ENCODE measurements at regions of chr16 and their contacts with region 1.

Region 1: DNA sequence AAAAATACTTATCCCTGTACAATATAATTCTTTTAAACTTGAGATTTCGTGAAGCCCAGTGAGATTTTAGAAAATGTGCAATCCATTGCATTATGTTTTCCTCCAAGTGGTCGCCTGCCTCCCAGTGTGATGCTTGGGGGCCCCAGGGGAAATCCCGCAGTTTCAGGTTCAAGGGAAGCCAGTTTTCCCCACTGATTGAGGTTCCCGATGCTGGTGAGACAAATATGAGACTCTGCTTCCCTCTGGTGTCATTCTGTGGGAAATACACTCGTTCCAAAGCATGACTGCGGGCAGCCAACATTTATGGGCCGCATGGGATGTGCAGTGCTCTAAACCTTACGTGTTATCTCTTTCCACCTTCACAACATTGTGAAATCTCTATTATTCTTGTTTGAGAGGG is 200.8 kb downstream of the PRKCB start:
- DNase-seq: no peak
- ATAC-seq: peak; percentile 47 to 68

Region 2: DNA sequence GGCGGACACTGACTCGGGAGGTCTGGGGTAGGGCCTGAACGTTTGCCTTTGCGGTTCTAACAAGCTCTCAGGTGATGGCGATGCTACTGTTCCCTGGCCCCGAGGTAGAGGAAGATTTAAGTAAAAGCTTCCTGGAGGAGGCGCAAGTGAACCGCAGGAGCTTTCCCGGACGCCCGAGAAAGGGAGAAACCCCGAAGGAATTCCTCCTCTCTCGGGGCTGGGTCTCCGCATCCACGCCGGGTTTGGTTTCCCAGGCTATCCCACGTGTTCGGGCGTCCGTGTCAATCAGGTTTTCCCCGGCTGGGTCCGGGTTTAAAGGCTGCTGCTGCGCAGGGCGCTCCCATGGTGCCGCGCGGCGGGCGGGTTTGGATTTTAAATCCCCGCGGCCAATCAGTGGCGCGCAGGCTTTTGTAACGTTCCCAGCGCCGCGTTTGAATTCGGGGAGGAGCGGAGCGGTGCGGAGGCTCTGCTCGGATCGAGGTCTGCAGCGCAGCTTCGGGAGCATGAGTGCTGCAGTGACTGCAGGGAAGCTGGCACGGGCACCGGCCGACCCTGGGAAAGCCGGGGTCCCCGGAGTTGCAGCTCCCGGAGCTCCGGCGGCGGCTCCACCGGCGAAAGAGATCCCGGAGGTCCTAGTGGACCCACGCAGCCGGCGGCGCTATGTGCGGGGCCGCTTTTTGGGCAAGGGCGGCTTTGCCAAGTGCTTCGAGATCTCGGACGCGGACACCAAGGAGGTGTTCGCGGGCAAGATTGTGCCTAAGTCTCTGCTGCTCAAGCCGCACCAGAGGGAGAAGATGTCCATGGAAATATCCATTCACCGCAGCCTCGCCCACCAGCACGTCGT is 358.0 kb before region 1 on chr16 and contains the start of gene PLK1:
- intact Hi-C with region 1: loop called in 1 of 2 experiments (anchors 5 kb)
- DNase-seq: peak; percentile 78
- ATAC-seq: peak; percentile 93 to 95
- total RNA-seq, gene PLK1: 0.52 to 1.5 TPM

Region 3: DNA sequence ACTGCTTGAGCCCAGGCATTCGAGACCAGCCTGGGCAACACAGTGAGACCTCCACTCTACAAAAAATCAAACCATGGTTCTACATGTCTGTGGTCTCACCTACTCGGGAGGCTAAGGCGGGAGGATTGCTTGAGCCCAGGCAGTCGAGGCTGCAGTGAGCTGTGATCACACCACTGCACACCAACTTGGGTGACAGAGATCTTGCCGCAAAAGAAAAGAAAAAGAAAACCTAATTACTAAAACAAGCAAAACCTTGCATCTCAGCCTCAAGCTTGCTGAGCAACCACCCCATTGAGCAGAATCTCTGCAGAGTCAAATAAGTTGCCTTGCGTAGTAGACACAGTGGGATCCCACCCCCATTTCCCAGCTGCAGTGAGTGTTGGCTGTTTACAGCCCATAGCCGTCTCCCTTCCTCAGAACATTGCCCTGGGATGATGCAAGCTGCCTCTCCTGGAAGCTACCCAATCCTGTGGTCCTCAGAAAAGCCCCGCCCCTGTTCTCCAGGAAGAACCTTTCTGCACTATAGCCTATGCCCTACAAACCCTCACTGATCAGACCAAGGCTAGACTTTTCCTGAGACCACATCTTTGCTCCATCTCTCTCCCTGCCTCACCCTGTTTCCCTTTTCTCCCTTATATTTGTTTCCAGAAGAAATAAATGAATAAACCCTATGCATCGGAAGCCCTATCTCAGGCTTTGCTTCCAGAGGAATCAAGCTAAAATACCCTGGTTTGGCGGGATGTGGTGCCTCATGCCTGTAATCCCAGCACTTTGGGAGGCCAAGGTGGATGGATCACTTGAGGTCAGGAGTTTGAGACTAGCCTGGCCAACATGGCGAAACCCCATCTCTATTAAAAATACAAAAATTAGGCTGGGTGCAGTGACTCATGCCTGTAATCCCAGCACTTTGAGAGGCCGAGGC is 306.9 kb before region 1 on chr16:
- intact Hi-C with region 1: loop called in 1 of 2 experiments (anchors 2 kb)
- DNase-seq: no peak
- ATAC-seq: peak in 1 of 2 donors; percentile 57

Region 4: GRCh38 chr16:23803591-23804123 is 233.0 kb before region 1 on chr16:
- intact Hi-C with region 1: loop called in 1 of 2 experiments (anchors 5 kb)
- DNase-seq: peak; percentile 42
- ATAC-seq: peak in 1 of 2 donors; percentile 65

Measured in left cardiac atrium (tissue), 4 donors.